Right ventricle myocardium inferior (tissue), 1 donor: ENCODE measurements at regions of chr6 and their contacts with region 1.

Region 1: DNA sequence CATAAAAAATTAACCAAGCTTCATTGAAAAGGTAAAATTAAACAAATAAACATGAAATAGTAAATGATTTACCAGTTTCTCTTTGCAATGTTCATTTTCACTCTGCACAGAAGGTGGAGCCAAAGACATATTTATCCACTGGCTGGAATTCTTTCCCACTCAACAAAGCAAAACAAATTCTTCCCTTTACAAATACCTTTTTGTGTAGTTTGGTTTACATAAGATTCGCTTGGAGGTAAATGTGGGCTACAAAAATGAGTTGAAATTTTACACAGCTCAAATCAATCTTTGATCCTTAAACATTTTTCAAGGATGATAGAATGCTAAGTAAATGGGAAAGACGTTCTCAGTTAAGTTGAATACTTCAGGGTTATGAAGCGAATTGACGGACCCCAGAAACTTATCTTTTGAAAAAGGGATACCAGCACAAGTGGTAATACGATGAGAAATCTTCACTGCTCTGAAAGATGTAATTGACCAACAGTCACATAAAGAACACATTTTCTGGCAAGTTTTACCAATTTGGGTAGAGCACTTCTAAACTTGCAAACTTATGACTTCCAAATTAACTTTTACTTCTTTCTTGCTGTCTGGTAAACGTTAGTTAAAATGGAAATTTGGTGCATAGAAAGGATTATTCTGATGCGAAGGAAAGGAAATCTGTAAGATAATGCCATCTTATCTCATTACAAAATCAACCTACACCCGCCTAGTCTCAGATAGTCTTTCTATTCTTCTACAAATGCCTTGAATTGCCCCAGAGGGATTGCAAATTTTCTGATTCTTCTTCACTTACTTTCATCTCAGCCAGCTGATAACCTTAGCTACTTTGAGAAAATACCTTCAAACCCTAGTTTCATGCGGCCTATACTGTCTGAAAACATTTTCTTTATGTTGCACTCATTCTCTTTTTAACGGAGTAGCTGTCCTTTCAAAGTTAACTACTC is 4.7 kb upstream of the GJA1 start:
- DNase-seq: no peak
- ATAC-seq: no peak

Region 2: DNA sequence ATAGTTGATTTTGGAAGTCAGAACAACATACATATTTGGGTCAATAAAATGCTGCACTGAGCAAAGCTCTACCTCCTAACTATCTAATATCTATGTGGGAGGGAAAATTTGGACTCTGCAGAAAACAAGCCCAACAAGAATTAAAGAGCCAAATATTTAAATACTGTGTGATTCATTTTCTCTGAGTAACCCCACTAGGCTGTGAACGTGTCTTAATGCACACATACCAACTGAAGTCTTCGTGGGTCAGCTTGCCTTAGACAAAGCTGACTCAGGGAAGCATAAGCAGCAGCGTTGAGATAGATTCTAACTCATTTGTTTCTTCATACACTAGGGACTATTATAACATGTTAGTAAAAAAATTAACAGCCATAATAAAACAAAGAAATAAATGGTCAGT is 118.9 kb after region 1 on chr6:
- intact Hi-C with region 1: no loop called
- DNase-seq: no peak
- ATAC-seq: no peak

Region 3: GRCh38 chr6:122289762-122290539 is 859.2 kb after region 1 on chr6:
- intact Hi-C with region 1: loop called (anchors 5 kb)
- DNase-seq: no peak
- ATAC-seq: no peak